ENCODE measurements at regions of chr1 and their contacts with region 1.

Region 1: DNA sequence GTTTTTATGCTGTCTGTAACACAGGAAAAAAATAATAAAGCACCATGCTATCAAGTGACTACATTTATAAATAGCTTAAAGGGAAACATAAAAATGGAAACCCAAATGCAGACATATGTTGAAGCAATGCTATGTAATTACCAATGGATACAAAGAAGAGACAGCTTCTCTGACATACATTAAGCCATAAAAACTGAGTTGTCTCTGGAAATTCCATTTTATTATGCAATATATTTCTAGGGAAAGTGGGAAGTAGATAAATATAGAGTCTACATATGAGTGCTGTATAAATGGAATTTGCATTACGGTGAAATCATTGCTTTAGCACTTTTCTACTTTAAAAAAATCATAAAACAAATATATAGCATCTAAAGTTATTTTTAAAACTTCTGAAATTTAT is 135.2 kb upstream of the COL11A1 start:
- DNase-seq: no peak
- ATAC-seq: no peak
- H3K4me3 ChIP-seq: no peak overlapping the region
- H3K4me3 Mint-ChIP-seq: no peak overlapping the region
- H3K27ac ChIP-seq: no peak overlapping the region
- H3K27ac Mint-ChIP-seq: no peak overlapping the region
- H3K4me1 ChIP-seq: no peaks in the 10 kb centered on the region
- H3K4me1 Mint-ChIP-seq: no peaks in the 10 kb centered on the region
- H3K27me3 ChIP-seq: no peaks in the 10 kb centered on the region
- H3K27me3 Mint-ChIP-seq: no peaks in the 10 kb centered on the region
- CTCF ChIP-seq: no peak

Region 2: DNA sequence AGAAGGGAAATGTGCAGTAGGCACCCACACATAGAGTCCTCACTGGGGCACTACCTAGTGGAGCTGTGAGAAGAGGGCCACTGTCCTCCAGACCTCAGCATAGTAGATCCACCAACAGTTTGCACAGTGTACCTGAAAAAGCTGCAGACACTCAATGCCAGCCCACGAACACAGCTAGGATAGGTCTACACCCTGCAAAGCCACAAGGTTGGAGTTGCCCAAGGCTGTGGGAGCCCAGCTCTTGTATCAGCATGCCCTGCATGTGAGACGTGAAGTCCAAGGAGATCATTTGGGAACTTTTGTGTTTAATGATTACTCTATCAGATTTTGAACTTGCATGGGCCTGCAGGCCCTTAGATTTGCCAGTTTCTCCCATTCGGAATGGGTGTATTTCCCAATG is 947.4 kb before region 1 on chr1:
- CTCF ChIA-PET with region 1: no interaction called
- POLR2A ChIA-PET with region 1: no interaction called
- intact Hi-C with region 1: loop called in 1 of 2 experiments (anchors 5 kb)
- DNase-seq: no peak
- ATAC-seq: no peak
- H3K4me3 ChIP-seq: no peak overlapping the region
- H3K4me3 Mint-ChIP-seq: no peak overlapping the region
- H3K27ac ChIP-seq: no peak overlapping the region
- H3K27ac Mint-ChIP-seq: no peak overlapping the region
- H3K4me1 ChIP-seq: no peaks in the 10 kb centered on the region
- H3K4me1 Mint-ChIP-seq: no peaks in the 10 kb centered on the region
- H3K27me3 ChIP-seq: no peaks in the 10 kb centered on the region
- H3K27me3 Mint-ChIP-seq: no peaks in the 10 kb centered on the region
- CTCF ChIP-seq: no peak

Region 3: GRCh38 chr1:103283841-103284669 is 40.6 kb after region 1 on chr1:
- CTCF ChIA-PET with region 1: no interaction called
- POLR2A ChIA-PET with region 1: no interaction called
- intact Hi-C with region 1: no loop called
- DNase-seq: no peak
- ATAC-seq: no peak
- H3K4me3 ChIP-seq: no peak overlapping the region
- H3K4me3 Mint-ChIP-seq: no peak overlapping the region
- H3K27ac ChIP-seq: no peak overlapping the region
- H3K27ac Mint-ChIP-seq: no peak overlapping the region
- H3K4me1 ChIP-seq: no peaks in the 10 kb centered on the region
- H3K4me1 Mint-ChIP-seq: no peaks in the 10 kb centered on the region
- H3K27me3 ChIP-seq: no peaks in the 10 kb centered on the region
- H3K27me3 Mint-ChIP-seq: no peaks in the 10 kb centered on the region
- CTCF ChIP-seq: no peak